Natural killer cell (primary cell): ENCODE measurements at regions of chr10 and their contacts with region 1.

Region 1: DNA sequence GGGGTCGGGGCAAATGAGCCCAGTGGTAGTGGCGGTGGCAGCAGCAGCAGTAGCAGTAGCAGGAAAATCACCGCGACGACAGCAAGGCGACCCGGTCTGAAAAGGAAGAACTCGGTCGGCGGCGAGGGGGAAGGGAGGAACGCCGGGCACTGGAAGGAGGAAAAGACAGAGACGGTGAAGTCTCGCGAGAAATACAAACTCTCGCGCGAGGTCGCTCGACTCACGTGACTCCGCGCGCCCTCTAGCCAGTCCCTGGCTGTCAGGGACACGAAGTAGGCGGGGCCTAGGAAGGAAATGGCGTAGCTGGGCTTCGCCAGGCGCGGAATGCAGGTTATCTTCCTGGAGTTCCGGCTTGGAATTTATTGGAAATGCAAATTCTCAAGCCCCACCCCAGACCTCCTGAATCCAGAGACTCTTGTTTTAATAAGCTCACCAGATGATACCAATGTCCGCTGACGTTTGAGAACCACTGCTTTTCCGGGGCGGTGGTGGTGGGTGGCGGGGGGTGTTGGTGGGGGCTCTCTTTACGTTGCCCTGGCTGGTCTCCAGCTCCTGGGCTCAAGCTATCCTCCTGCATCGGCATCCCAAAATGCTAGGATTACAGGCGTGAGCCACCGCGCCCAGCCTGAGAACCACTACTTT is at the start of gene SMNDC1:
- DNase-seq: peak; percentile 98 to 99
- ATAC-seq: peak; percentile 89 to 96 (median 94)
- H3K4me3 ChIP-seq: peak within 1 kb of the TSS; percentile 79
- H3K4me3 Mint-ChIP-seq: peak within 1 kb of the TSS; percentile 94
- H3K27ac ChIP-seq: peak within 1 kb of the TSS; percentile 94
- H3K27ac Mint-ChIP-seq: peak within 1 kb of the TSS; percentile 93 to 97
- H3K4me1 ChIP-seq: peaks cover 7% of the 10 kb centered on the region
- H3K4me1 Mint-ChIP-seq: peaks cover 32 to 43% of the 10 kb centered on the region in 2 donors
- H3K27me3 ChIP-seq: no peaks in the 10 kb centered on the region
- H3K27me3 Mint-ChIP-seq: no peaks in the 10 kb centered on the region
- CTCF ChIP-seq: no peak
- total RNA-seq, gene SMNDC1: 53.3 to 56.3 (median 55.3) TPM

Region 2: DNA sequence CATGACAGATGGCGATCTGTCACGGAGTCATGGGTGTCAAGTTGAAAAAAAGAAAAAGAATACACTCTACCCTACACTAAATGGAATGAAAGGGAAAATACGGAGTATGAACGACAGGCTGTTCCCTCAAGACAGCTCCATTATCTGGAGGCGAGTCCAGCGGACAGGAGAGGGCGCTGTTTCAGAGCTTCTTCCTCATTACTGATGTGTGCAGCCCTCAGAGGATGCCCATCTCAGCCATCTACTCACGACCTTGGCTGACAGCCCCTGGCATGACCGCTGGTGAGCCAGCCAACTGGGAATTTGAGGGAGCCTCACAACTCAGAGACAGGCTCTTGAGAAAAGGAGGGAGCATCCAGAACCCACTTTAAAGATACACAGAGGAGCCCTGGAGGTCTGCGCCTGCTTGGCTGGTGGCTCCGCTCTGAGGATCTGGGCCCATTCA is 49.4 kb after region 1 on chr10:
- intact Hi-C with region 1: loop called (anchors 1 kb)
- DNase-seq: peak; percentile 76 to 87
- ATAC-seq: peak; percentile 76 to 91 (median 86)
- H3K4me3 ChIP-seq: no peak overlapping the region
- H3K4me3 Mint-ChIP-seq: no peak overlapping the region
- H3K27ac ChIP-seq: no peak overlapping the region
- H3K27ac Mint-ChIP-seq: peak overlapping the region in 1 of 2 donors; percentile 29
- H3K4me1 ChIP-seq: peaks cover 52% of the 10 kb centered on the region
- H3K4me1 Mint-ChIP-seq: peaks cover 13 to 21% of the 10 kb centered on the region in 2 donors
- H3K27me3 ChIP-seq: no peaks in the 10 kb centered on the region
- H3K27me3 Mint-ChIP-seq: peaks cover 8 to 13% of the 10 kb centered on the region in 2 donors
- CTCF ChIP-seq: peak; percentile 93

Region 3: DNA sequence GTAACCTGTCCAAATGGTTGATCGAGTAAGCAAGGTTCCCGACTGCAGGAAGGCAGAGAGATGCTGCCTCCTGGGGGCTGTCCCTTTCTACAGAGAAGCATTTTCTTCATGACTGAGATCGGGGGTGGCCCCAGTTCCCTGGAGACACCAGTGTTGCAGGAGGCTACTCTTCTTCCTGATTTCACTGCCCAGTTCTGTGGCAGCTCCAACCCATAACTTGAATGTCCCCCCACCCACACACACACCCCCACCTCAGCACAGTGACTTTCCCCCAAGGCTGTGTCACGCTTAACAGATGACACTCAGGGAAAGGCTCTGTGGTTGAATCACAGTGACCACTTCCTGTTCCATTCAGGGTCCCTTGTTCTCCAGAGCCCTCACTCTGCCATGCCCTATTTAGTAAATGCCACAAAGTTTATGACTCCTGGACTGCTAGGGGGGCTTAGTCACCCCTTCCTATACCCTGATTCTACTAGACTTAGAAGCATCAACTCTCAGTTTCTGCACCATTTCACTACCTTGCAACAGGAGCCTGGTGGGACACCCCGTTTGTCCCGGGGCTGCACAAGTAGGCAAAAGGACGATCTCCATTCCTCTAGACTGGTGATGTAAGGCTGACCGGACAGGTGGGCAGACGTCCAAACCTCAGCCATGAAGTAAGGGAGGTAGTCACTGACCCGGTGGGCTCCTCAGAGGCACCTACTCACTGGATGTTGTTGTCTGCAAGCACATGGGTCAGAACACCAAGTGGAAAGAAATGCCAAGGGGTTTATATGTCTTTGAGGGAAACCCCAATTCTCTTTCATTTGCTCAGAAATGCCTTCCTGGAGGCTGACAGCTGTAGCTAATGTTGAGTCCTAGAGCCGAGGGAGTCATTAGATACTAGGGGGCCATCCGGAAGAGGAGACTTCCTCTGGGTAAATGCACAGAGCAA is 231.3 kb after region 1 on chr10:
- intact Hi-C with region 1: loop called (anchors 1 kb)
- DNase-seq: peak; percentile 30 to 69
- ATAC-seq: peak; percentile 80 to 87 (median 86)
- H3K4me3 ChIP-seq: no peak overlapping the region
- H3K4me3 Mint-ChIP-seq: peak overlapping the region; percentile 45
- H3K27ac ChIP-seq: no peak overlapping the region
- H3K27ac Mint-ChIP-seq: peak overlapping the region in 1 of 2 donors; percentile 78
- H3K4me1 ChIP-seq: peaks cover 21% of the 10 kb centered on the region
- H3K4me1 Mint-ChIP-seq: peaks cover 19 to 24% of the 10 kb centered on the region in 2 donors
- H3K27me3 ChIP-seq: no peaks in the 10 kb centered on the region
- H3K27me3 Mint-ChIP-seq: peaks cover 0 to 5% of the 10 kb centered on the region in 2 donors
- CTCF ChIP-seq: peak; percentile 26

Region 4: GRCh38 chr10:110567201-110568054 is 262.5 kb after region 1 on chr10 and contains the start of gene SMC3:
- intact Hi-C with region 1: loop called (anchors 1 kb)
- DNase-seq: peak; percentile 90 to 95
- ATAC-seq: peak; percentile 86 to 94 (median 87)
- H3K4me3 ChIP-seq: peak within 1 kb of the TSS; percentile 64
- H3K4me3 Mint-ChIP-seq: peak within 1 kb of the TSS; percentile 94
- H3K27ac ChIP-seq: peak within 1 kb of the TSS; percentile 75
- H3K27ac Mint-ChIP-seq: peak within 1 kb of the TSS; percentile 96 to 99
- H3K4me1 ChIP-seq: peaks cover 12% of the 10 kb centered on the region
- H3K4me1 Mint-ChIP-seq: peaks cover 40 to 41% of the 10 kb centered on the region in 2 donors
- H3K27me3 ChIP-seq: no peaks in the 10 kb centered on the region
- H3K27me3 Mint-ChIP-seq: peaks cover 13 to 16% of the 10 kb centered on the region in 2 donors
- CTCF ChIP-seq: no peak
- total RNA-seq, gene SMC3: 36.6 to 38.5 (median 37.8) TPM

Region 5: DNA sequence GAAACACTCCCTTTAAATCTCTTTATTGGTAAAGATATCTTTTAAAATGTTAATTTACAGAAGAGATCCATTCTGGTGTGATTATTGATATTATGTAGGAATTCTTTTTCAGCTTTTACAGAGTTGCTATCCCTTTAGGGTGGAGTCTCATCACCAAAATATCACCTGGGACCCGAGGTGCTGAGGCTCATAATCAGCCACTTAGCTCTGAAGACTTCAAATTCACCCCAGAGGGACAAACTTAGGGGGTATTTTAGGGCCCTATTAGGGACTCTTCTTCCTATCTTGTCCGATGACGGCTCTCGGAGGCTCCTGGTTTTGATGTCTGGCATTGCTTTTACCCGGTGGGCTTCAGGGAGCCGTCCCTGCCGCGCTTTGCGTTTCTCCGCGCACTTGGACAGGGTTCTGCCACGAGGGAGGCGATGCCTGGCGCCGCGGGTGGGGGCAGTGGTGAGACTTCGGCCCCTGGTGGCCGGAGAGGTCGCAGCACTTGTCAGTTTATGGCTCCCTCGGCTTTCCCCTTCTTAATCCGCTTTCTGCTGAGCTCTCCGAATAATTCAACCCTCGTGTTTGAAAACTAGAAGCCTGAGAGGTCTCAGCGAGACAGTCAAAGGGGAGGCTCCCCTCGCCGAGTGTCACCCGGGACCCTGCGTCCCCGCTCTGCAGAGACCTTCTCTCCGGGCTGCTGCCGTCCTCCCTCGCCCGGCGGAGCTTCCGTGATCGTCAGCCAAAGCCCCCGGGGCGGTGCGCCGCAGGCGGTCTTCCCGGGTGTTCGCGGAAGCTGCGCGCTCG is 367.1 kb after region 1 on chr10:
- intact Hi-C with region 1: loop called (anchors 10 kb)
- DNase-seq: peak; percentile 64 to 70
- ATAC-seq: peak; percentile 93 to 95 (median 95)
- H3K4me3 ChIP-seq: peak overlapping the region; percentile 59
- H3K4me3 Mint-ChIP-seq: peak overlapping the region; percentile 96
- H3K27ac ChIP-seq: peak overlapping the region; percentile 76
- H3K27ac Mint-ChIP-seq: peak overlapping the region; percentile 83 to 95
- H3K4me1 ChIP-seq: peaks cover 4% of the 10 kb centered on the region
- H3K4me1 Mint-ChIP-seq: peaks cover 10 to 15% of the 10 kb centered on the region in 2 donors
- H3K27me3 ChIP-seq: no peaks in the 10 kb centered on the region
- H3K27me3 Mint-ChIP-seq: peaks cover 13 to 21% of the 10 kb centered on the region in 2 donors
- CTCF ChIP-seq: peak; percentile 83